Activated CD8-positive, alpha-beta T cell treated with anti-CD3 and anti-CD28 coated beads, Interleukin-2, amount 10 ng/mL, durations not matched to agents 7 days and 5 days (primary cell): ENCODE measurements at regions of chr2 and their contacts with region 1.

Region 1: GRCh38 chr2:230319211-230319862 is 7.7 kb upstream of the SP140L start:
- DNase-seq: peak; percentile 93
- ATAC-seq: peak; percentile 94
- H3K4me3 Mint-ChIP-seq: peak overlapping the region; percentile 60
- H3K27ac Mint-ChIP-seq: peak overlapping the region; percentile 91
- H3K4me1 Mint-ChIP-seq: peaks cover 66% of the 10 kb centered on the region
- H3K27me3 Mint-ChIP-seq: no peaks in the 10 kb centered on the region

Region 2: GRCh38 chr2:229901819-229902218 is 417.5 kb before region 1 on chr2:
- CTCF ChIA-PET with region 1: no interaction called
- POLR2A ChIA-PET with region 1: no interaction called
- DNase-seq: no peak
- ATAC-seq: no peak
- H3K4me3 Mint-ChIP-seq: no peak overlapping the region
- H3K27ac Mint-ChIP-seq: no peak overlapping the region
- H3K4me1 Mint-ChIP-seq: peaks cover 21% of the 10 kb centered on the region
- H3K27me3 Mint-ChIP-seq: no peaks in the 10 kb centered on the region

Region 3: DNA sequence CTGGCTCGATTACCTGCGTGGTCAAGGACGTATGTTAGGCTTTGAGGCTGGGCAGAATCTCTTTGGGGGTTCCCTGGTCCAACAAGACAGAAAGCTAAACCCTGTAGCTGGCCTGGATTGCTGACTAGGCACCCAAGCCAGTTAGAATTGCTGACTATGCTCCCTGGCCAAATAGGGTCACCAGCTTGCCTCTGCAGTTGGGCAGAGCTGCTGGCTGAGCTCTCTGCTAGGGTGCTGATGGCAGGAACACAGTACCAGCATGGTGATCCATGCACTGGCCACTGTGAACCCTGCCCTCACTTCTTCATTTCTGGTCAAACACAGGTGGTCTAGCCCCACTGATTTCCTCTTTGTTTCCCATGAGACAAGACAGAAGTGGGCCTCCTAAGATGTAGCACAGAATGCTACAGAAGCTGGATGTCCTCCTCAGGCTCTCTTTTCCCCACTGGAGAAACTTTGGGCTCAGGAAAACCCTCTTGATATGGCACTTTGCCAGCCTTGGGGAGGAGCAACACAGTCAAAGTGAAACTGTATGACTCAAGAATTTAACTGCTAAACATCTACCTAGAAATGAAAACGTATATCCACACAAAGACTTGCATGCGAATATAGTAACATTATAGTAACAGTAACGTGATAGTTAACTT is 28.4 kb after region 1 on chr2:
- CTCF ChIA-PET with region 1: interaction called, 4 read pairs
- POLR2A ChIA-PET with region 1: interaction called, 16 read pairs
- DNase-seq: peak; percentile 57
- ATAC-seq: peak; percentile 65
- H3K4me3 Mint-ChIP-seq: peak overlapping the region; percentile 61
- H3K27ac Mint-ChIP-seq: peak overlapping the region; percentile 91
- H3K4me1 Mint-ChIP-seq: peaks cover 72% of the 10 kb centered on the region
- H3K27me3 Mint-ChIP-seq: no peaks in the 10 kb centered on the region